Gastrocnemius medialis (tissue), 4 donors: ENCODE measurements at regions of chr14 and their contacts with region 1.

Region 1: DNA sequence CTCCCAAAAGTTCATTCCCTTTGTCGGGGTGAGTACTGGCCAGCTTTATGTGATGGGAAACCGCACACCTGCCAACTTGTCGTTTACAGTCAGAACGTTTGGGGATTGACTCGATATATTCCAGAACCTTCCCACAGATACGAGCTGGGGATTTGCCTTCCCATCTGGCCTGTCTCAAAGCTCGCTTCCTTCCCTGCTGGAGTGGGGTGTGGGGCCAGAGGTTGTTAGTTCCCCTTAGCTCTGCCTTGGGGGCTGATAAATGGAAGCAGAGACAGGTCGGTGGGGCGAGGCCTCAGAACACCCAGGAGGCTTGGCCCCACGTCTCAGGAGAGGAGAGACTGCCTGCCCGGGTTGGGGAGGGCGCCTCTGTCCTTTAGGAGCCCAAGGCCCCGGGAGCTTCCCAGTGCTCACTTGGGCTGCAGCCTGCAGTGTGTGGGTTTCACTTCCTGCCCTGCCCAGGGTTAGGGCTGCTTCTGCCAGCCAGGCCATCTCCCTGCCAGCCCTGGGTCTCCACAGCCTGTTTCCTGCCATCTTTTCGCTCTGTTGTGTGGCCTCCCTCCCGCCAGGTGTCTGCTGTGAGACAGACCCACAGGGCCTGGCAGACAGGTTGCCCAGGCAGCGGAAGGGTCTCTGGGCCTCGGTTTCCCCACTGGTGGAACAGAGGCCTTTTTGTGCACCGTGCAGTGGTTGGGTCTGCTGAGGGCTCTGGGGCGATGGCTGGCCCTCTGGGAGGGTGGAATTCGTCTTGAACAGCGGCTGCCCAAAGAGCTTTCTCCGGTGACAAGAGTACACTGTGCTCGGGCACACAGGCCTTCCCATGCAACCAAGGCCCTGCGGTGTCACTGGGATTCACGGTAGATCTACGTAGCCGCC is 8.1 kb upstream of the TEX22 start:
- DNase-seq: no peak
- ATAC-seq: peak in 1 of 2 donors; percentile 10
- H3K4me3 ChIP-seq: no peak overlapping the region
- H3K27ac ChIP-seq: peak overlapping the region in 1 of 4 donors; percentile 50
- H3K4me1 ChIP-seq: peaks cover 0 to 6% of the 10 kb centered on the region in 2 donors
- H3K27me3 ChIP-seq: no peaks in the 10 kb centered on the region
- CTCF ChIP-seq: no peak
- POLR2A ChIP-seq: no peak

Region 2: DNA sequence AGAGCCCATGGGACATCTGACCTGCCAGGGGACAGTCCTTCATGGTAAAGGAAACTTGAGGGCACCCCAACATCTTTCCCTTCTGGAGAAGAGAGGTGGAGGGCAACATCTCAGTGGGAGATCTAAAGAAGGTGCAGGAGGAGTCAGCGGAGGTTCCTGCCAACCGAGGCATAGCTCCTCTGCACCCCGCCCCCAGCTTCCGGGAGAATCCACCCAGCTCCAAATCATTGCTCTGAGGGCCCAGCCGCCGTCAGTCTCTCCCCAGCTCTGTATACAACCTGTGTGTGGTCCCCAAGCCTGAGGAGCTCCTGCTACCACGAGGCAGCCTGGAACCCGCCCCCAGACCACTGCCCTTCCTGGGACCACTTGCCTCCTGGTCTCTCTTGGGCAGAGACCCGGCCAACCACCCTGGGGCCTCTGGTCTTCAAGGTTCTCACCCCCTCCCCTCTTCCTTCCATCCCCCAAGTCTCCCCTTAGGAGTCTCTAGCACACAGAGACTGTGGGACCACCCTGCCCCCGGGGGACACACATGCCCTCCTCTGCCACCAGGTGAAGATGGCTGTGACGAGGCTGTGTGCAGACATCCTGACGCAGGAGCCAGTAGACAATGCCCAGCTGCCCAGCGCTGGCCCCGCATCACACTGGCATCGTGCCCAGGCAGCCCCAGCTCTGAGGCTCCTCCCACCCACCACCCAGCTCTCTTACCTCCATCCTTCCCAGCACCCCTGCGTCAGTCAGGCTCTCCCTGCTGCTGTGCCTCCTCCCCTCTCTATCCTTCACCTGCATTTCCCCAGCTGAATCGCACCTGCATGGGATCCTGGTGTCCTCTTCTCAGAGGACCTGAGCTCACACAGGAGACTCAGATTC is 196.1 kb before region 1 on chr14:
- in situ Hi-C with region 1: no loop called
- intact Hi-C with region 1: no loop called
- DNase-seq: no peak
- ATAC-seq: no peak
- H3K4me3 ChIP-seq: no peak overlapping the region
- H3K27ac ChIP-seq: peak overlapping the region in 3 of 4 donors; percentile 73 to 74 (median 74)
- H3K4me1 ChIP-seq: peaks cover 13 to 17% of the 10 kb centered on the region in 2 donors
- H3K27me3 ChIP-seq: peaks cover 25 to 37% (median 35%) of the 10 kb centered on the region in 3 donors
- CTCF ChIP-seq: no peak
- POLR2A ChIP-seq: no peak

Region 3: DNA sequence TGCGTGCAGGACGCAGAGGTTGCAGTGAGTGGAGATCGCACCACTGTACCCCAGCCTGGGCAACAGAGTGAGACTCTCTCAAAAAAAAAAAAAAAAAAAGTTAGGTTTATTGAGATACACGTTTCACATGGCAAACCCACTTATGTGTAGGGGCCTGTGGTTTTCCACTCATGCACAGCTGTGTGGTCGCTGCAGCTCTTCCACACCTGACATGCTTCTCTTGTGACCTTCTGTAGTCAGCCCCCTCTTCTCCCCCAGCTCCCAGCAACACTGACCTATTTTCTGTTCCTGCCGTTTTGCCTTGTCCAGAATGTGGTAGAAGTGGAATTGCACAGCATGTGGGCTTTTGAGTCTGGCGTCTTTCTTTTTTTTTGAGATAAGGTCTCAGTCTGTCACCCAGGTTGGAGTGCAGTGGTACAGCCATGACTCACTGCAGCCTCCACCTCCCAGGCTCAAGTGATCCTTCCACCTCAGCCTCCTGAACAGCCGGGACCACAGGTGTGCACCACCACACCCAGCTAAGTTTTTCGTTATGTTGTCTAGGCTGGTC is 37.8 kb after region 1 on chr14:
- in situ Hi-C with region 1: no loop called
- intact Hi-C with region 1: loop called (anchors 1 kb)
- DNase-seq: no peak
- ATAC-seq: no peak
- H3K4me3 ChIP-seq: no peak overlapping the region
- H3K27ac ChIP-seq: no peak overlapping the region
- H3K4me1 ChIP-seq: peaks cover 3 to 12% of the 10 kb centered on the region in 2 donors
- H3K27me3 ChIP-seq: no peaks in the 10 kb centered on the region
- CTCF ChIP-seq: no peak
- POLR2A ChIP-seq: no peak

Region 4: GRCh38 chr14:105439691-105440553 is 49.7 kb after region 1 on chr14:
- in situ Hi-C with region 1: no loop called
- intact Hi-C with region 1: no loop called
- DNase-seq: no peak
- ATAC-seq: no peak
- H3K4me3 ChIP-seq: no peak overlapping the region
- H3K27ac ChIP-seq: no peak overlapping the region
- H3K4me1 ChIP-seq: no peaks in the 10 kb centered on the region
- H3K27me3 ChIP-seq: no peaks in the 10 kb centered on the region
- CTCF ChIP-seq: no peak
- POLR2A ChIP-seq: no peak